ENCODE measurements at regions of chr16 and their contacts with region 1.

Region 1: DNA sequence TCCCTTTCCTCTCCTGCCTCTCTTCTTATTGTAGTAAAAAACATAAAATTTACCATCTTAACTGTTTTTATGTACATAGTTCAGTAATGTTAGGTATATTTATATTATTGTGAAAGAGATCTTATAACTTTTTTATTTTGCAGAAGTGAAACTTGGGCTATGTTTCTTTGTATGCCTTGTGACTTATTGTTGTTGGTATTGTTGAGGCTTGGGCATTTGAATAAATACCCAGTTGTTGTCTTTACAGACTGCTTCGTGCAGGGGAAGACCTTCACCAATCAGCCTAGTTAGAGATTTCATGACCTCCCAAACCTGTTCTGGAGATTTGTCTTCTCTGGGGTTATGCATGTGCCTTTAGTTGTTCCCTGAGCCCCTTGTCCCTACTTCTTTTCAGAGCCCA is 31.9 kb downstream of the REXO5 start:
- DNase-seq: no peak
- ATAC-seq: no peak

Region 2: GRCh38 chr16:20901355-20902112 is 63.3 kb after region 1 on chr16:
- intact Hi-C with region 1: no loop called
- DNase-seq: peak; percentile 71
- ATAC-seq: peak; percentile 40

Region 3: DNA sequence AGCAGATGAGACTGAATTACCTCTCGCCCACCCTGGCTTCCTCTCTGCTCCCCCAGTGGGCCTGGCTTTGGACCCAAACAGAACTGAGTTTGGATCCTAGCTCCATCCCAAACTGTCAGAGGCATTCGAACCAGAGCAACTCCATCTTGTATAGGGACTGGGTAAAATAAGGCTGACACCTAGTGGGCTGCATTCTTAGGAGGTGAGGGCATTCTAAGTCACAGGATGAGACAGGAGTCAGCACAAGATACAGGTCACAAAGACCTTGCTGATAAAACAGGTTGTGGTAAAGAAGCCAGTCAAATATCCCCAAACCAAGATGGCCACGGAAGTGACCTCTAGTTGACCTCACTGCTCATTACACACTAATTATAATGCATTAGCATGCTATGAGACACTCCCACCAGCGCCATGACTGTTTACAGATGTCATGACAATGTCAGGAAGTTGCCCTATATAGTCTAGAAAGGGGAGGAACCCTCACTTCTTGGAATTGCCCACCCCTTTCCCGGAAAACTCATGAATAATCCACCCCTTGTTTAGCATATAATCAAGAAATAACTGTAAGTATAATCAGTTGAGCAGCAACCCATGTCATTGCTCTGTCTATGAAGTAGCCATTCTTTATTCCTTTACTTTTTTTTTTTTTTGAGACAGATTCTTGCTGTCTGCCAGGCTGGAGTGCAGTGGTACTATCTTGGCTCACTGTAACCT is 106.8 kb after region 1 on chr16:
- intact Hi-C with region 1: loop called (anchors 5 kb)
- DNase-seq: no peak
- ATAC-seq: peak; percentile 42

Region 4: GRCh38 chr16:21937336-21937829 is 1099.1 kb after region 1 on chr16:
- intact Hi-C with region 1: no loop called
- DNase-seq: no peak
- ATAC-seq: no peak

Measured in sciatic nerve (tissue), 2 donors.